Activated CD4-positive, alpha-beta T cell treated with anti-CD3 and anti-CD28 coated beads, Interleukin-2, amount 10 ng/mL, durations not matched to agents 24 days and 14 days (primary cell): ENCODE measurements at regions of chr5 and their contacts with region 1.

Region 1: GRCh38 chr5:62326302-62326701 is 20.3 kb downstream of the KIF2A start:
- DNase-seq: no peak
- H3K4me3 Mint-ChIP-seq: peak overlapping the region; percentile 2
- H3K27ac Mint-ChIP-seq: peak overlapping the region; percentile 78
- H3K4me1 Mint-ChIP-seq: peaks cover 59% of the 10 kb centered on the region
- H3K27me3 Mint-ChIP-seq: no peaks in the 10 kb centered on the region

Region 2: GRCh38 chr5:62312036-62312435 is 14.3 kb before region 1 on chr5:
- intact Hi-C with region 1: loop called (anchors 2 kb)
- DNase-seq: no peak
- H3K4me3 Mint-ChIP-seq: peak overlapping the region; percentile 69
- H3K27ac Mint-ChIP-seq: peak overlapping the region; percentile 61
- H3K4me1 Mint-ChIP-seq: peaks cover 70% of the 10 kb centered on the region
- H3K27me3 Mint-ChIP-seq: no peaks in the 10 kb centered on the region

Region 3: DNA sequence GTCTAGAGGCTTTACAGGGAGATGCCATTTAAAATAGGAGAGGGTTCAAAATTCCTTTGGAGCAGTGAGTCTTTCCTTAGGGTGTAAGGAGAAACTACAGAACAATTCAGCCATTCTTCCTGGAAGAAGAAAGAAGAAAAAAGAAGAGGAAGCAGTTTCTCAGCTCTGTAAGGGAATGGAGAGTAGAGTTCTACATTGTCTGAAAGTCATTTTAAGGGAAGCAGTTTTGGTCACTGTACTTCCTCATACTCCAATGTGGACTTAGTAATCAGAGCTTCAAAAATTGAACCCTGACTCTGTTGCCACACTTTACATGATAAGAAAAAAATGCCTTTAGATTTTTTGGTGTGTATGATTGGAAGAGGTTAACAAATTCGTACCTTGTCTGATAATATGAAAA is 374.7 kb after region 1 on chr5:
- intact Hi-C with region 1: no loop called
- DNase-seq: no peak
- H3K4me3 Mint-ChIP-seq: no peak overlapping the region
- H3K27ac Mint-ChIP-seq: no peak overlapping the region
- H3K4me1 Mint-ChIP-seq: no peaks in the 10 kb centered on the region
- H3K27me3 Mint-ChIP-seq: no peaks in the 10 kb centered on the region